ENCODE measurements at regions of chr17 and their contacts with region 1.

Region 1: DNA sequence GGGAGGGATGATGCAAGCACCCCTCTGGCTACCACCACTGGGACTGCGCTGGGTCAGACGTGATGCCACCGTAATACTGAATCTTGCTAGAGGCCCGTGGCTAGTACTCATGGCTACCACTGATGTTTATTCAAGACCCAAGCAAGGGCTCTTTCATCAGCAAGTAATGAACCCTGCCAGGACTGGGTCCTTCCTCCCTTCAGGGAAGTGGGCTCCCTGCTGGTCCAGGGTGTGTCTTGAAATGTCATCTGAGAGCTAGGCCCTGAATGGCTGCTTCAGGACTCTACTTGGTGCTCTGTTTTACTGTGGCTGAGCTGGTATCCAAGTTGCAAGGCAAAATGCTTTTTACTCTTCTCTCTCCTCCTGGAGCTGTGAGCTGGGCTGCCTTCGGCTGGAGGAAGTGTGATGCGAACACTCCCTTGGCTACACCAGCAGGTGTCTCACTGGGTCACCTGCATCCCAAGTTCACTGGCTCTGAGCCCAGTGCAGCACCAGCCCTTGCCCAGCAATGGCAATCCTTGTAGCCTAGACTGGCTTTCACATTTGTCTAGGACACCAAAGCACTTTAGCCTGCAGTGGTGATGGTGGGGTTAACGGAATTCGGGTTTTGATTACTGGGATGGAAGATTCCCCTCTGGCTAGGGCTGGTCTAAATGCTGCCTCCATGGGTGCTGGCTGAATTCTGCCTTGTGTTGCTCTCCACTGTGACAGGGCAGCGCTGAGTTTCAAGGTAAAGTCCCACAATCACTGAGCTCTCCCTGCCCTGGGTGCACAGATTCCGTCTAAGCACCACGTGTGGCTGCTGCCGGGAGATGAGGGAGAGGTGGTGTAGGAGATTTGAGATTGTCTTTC is 98.6 kb downstream of the USP22 start:
- DNase-seq: peak; percentile 56
- H3K4me3 Mint-ChIP-seq: no peak overlapping the region
- H3K27ac Mint-ChIP-seq: no peak overlapping the region
- H3K4me1 Mint-ChIP-seq: no peaks in the 10 kb centered on the region
- H3K27me3 Mint-ChIP-seq: peaks cover 24% of the 10 kb centered on the region

Region 2: GRCh38 chr17:20992987-20993862 is 49.0 kb after region 1 on chr17:
- CTCF ChIA-PET with region 1: interaction called, 21 read pairs
- DNase-seq: peak; percentile 77
- H3K4me3 Mint-ChIP-seq: no peak overlapping the region
- H3K27ac Mint-ChIP-seq: no peak overlapping the region
- H3K4me1 Mint-ChIP-seq: peaks cover 2% of the 10 kb centered on the region
- H3K27me3 Mint-ChIP-seq: peaks cover 4% of the 10 kb centered on the region

Region 3: GRCh38 chr17:21242026-21242697 is 297.9 kb after region 1 on chr17:
- CTCF ChIA-PET with region 1: no interaction called
- DNase-seq: no peak
- H3K4me3 Mint-ChIP-seq: no peak overlapping the region
- H3K27ac Mint-ChIP-seq: no peak overlapping the region
- H3K4me1 Mint-ChIP-seq: peaks cover 3% of the 10 kb centered on the region
- H3K27me3 Mint-ChIP-seq: no peaks in the 10 kb centered on the region

Measured in activated naive CD4-positive, alpha-beta T cell treated with anti-CD3 and anti-CD28 coated beads, Interleukin-2, amount 10 ng/mL, durations not matched to agents 7 days and 5 days (primary cell).